ENCODE measurements at regions of chr17 and their contacts with region 1.

Region 1: GRCh38 chr17:78186692-78187595 is at the starts of genes AFMID and TK1:
- DNase-seq: peak; percentile 95 to 100
- H3K4me3 ChIP-seq: peak within 1 kb of the TSS; percentile 71 to 85 (median 80)
- H3K27ac ChIP-seq: peak within 1 kb of the TSS; percentile 94
- H3K4me1 ChIP-seq: peaks cover 0 to 13% (median 5%) of the 10 kb centered on the region in 4 experiments; a peak in 6 of 7 replicates
- H3K27me3 ChIP-seq: no peaks in the 10 kb centered on the region; a peak in 1 of 7 replicates
- CTCF ChIP-seq: peak; percentile 72 to 82 (median 80)
- EP300 ChIP-seq: no peak
- POLR2A ChIP-seq: peak; percentile 98
- RAD21 ChIP-seq: peak; percentile 2 to 27; a peak in 1 of 4 replicates
- total RNA-seq, gene AFMID: 53.0 and 54.8 TPM in 2 replicates
- total RNA-seq, gene TK1: 66.9 and 76.5 TPM in 2 replicates

Region 2: GRCh38 chr17:78128551-78129350 is 58.2 kb before region 1 on chr17 and contains the start of gene TMC6:
- CTCF ChIA-PET with region 1: interaction called, 11 read pairs
- POLR2A ChIA-PET with region 1: interaction called, 10 read pairs
- DNase-seq: peak in 1 of 2 experiments; percentile 89
- H3K4me3 ChIP-seq: peak within 1 kb of the TSS; percentile 62 to 94 (median 70)
- H3K27ac ChIP-seq: no peak within 1 kb of the TSS; the same call in 1 of the 2 replicates
- H3K4me1 ChIP-seq: peaks cover 0 to 27% (median 17%) of the 10 kb centered on the region in 4 experiments; a peak in 6 of 7 replicates
- H3K27me3 ChIP-seq: peaks cover 0 to 23% (median 14%) of the 10 kb centered on the region in 4 experiments; a peak in 5 of 7 replicates
- CTCF ChIP-seq: no peak
- EP300 ChIP-seq: no peak
- POLR2A ChIP-seq: 0 out of 3 replicates have a peak, but pooled peaks of 1 of the 2 experiments have one; percentile 59
- RAD21 ChIP-seq: no peak
- total RNA-seq, gene TMC6: 73.1 and 77.6 TPM in 2 replicates

Region 3: DNA sequence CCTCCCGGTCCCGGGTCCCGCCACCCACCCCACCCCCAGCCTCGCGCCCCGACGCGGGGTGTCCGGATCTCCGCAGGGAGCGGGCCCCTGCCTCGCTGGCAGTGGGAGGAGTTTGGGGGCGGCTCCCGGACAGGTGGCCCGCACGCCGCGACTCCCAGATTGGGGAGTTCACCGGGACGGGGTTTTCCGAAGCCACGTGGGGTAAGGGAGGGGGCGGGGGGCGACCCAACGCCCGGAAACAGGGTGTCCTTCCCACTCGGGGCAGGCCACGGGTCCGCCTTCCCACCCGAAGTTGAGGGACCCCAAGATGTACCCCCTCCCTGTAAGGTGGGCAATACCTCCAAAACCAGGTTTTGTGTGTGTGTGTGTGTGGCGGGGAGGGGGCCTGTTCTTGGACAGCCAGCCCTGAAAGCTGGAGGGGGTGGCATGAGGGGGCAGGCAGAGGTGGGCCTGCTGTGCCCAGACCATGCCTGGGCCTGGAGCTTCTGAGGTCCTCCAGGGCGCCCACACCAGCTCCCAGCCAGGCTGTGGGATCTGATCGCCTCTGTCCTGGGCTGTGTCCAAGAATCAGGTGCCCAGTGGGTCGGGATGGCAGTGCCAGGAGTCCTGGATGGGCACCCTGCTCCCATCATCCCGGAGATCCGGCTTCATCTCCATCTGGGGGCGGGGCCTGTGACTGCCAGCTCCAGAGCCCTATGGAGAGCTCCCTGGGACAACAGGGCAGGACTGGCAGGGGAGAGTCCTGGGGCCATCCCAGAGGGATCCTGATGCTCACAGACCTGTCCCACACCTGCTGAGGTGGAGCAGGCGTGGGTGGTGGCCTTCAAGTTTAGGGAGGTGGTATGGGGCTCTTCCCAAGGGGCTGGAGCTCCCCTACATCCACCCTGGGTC is 17.8 kb before region 1 on chr17:
- CTCF ChIA-PET with region 1: interaction called, 76 read pairs
- POLR2A ChIA-PET with region 1: interaction called, 131 read pairs
- DNase-seq: peak in 1 of 2 experiments; percentile 80
- H3K4me3 ChIP-seq: peak overlapping the region; percentile 57 to 87 (median 65)
- H3K27ac ChIP-seq: no peak overlapping the region
- H3K4me1 ChIP-seq: peaks cover 5 to 39% (median 19%) of the 10 kb centered on the region in 4 experiments
- H3K27me3 ChIP-seq: no peaks in the 10 kb centered on the region
- CTCF ChIP-seq: no peak
- EP300 ChIP-seq: no peak
- POLR2A ChIP-seq: no peak
- RAD21 ChIP-seq: no peak

Region 4: DNA sequence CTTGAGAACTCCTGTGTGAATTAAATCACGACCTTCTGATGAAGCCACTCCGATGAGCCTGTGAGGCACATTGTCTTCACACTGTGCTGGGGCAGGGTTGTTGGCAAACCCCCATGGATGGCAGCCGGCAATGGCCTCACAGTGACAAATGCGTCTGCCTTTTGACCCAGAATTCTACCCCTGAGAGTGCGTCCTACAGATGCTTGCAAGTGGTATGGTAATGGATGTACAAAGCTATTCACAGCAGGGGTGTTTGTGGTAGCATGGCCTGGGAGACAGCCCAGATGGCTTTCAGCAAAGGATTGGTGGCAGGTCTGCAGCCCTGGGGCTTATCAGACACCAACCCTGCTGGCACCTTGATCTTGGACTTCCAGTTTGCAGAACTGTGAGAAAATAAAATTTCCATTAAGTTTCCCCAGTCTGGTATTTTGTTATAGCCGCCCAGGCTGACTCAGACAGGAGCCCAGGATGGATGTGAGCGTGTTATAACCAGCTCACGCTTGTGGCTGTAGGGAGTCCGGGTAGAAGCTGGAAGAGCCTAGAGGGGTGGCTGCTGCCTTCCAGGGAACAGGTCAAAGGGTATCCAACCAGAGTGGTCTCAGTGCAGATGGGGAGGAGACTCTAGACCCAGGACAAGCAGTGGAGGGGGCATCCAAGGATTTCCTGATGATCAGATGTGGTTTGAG is 10.3 kb after region 1 on chr17:
- CTCF ChIA-PET with region 1: interaction called, 65 read pairs
- POLR2A ChIA-PET with region 1: interaction called, 67 read pairs
- DNase-seq: no peak
- H3K4me3 ChIP-seq: no peak overlapping the region
- H3K27ac ChIP-seq: peak overlapping the region; percentile 29; the same call in 1 of the 2 replicates
- H3K4me1 ChIP-seq: peaks cover 0 to 11% (median 4%) of the 10 kb centered on the region in 4 experiments; a peak in 5 of 7 replicates
- H3K27me3 ChIP-seq: no peaks in the 10 kb centered on the region
- CTCF ChIP-seq: no peak
- EP300 ChIP-seq: no peak
- POLR2A ChIP-seq: no peak
- RAD21 ChIP-seq: no peak

Region 5: GRCh38 chr17:78214706-78215061 is 27.7 kb after region 1 on chr17:
- CTCF ChIA-PET with region 1: interaction called, 4 read pairs
- POLR2A ChIA-PET with region 1: interaction called, 36 read pairs
- DNase-seq: no peak
- H3K4me3 ChIP-seq: peak overlapping the region; percentile 85 to 94 (median 90)
- H3K27ac ChIP-seq: no peak overlapping the region
- H3K4me1 ChIP-seq: peaks cover 0 to 8% (median 4%) of the 10 kb centered on the region in 4 experiments; a peak in 4 of 7 replicates
- H3K27me3 ChIP-seq: no peaks in the 10 kb centered on the region
- CTCF ChIP-seq: no peak
- EP300 ChIP-seq: no peak
- POLR2A ChIP-seq: no peak
- RAD21 ChIP-seq: no peak

Region 6: DNA sequence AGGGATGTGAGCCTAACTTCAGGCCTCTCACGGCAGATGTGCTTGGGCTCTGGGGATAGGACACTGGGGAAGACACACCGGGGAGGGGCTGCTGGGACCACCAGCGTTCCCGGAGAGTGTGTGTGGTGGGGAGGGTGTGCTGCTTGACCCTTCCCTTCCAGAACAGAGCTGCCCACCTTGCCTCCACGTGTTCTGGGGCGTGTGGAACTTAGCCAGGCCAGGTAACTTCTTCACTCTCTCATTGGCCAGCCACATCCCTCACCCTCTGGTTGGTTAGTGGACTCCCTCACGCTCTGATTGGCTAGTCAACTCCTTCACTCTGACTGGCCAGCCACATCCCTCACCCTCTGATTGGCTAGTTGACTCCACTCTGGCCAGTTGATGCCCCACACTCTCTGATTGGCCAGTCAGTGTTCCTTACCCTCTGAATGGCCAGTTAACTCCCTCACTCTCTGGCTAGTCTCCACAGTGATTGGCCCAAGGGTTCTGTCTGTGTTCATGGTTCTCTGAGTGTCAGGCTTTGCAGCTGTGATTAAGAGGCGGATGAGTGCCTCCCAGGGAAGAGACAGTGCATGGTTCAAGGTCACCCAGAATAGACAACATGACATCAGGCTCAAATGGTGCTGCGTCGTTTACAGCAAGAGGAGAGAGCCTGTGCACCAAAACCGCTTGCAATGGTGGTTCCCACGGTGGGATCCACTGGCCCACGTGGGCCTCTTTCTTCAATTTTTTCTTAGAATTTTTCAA is 54.5 kb after region 1 on chr17:
- CTCF ChIA-PET with region 1: interaction called, 6 read pairs
- POLR2A ChIA-PET with region 1: interaction called, 11 read pairs
- DNase-seq: peak in 1 of 2 experiments; percentile 49
- H3K4me3 ChIP-seq: no peak overlapping the region
- H3K27ac ChIP-seq: no peak overlapping the region
- H3K4me1 ChIP-seq: peaks cover 0 to 3% (median 0%) of the 10 kb centered on the region in 4 experiments; a peak in 2 of 7 replicates
- H3K27me3 ChIP-seq: no peaks in the 10 kb centered on the region
- CTCF ChIP-seq: no peak
- EP300 ChIP-seq: no peak
- POLR2A ChIP-seq: no peak
- RAD21 ChIP-seq: no peak